Common myeloid progenitor, CD34-positive (primary cell): ENCODE measurements at regions of chr2 and their contacts with region 1.

Region 1: DNA sequence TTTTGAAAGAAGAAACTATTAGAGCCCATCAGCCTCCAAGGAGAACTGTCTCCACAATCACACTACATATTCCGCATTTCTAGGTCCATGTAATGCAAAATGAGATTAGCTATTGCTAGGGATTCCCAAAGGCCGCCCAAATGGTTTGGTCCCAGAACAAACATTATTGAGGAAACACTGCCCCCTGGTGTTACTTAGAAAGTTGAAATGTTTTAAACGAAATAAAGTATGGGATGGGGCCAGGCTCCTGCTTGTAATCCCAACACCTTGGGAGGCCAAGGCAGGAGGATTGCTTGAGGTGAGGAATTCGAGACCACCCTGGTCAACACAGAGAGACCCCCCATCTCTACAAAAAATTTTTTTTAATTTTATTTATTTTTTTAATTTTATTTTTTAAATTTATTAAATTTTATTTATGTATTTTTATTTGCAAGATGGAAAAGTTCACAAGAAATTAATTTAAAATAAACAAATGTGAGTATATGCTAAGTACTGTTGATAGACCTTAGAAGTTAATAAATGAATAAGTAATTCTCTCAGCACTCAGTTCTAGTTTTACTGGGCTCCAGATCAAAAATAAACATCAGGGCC is 5.5 kb downstream of the NHEJ1 start:
- DNase-seq: peak; percentile 65 to 83 (median 74)
- H3K4me3 ChIP-seq: no peak overlapping the region
- H3K27ac ChIP-seq: no peak overlapping the region
- H3K4me1 ChIP-seq: peaks cover 0 to 7% (median 6%) of the 10 kb centered on the region in 4 experiments
- H3K27me3 ChIP-seq: no peaks in the 10 kb centered on the region

Region 2: GRCh38 chr2:218979846-218980734 is 175.1 kb before region 1 on chr2:
- CTCF ChIA-PET with region 1: interaction called, 13 read pairs
- POLR2A ChIA-PET with region 1: no interaction called
- DNase-seq: peak; percentile 87 to 93 (median 91)
- H3K4me3 ChIP-seq: peak overlapping the region in 4 of 7 experiments; percentile 19 to 74 (median 52)
- H3K27ac ChIP-seq: no peak overlapping the region
- H3K4me1 ChIP-seq: peaks cover 0 to 44% (median 24%) of the 10 kb centered on the region in 4 experiments
- H3K27me3 ChIP-seq: peaks cover 9 to 92% (median 32%) of the 10 kb centered on the region in 5 experiments

Region 3: DNA sequence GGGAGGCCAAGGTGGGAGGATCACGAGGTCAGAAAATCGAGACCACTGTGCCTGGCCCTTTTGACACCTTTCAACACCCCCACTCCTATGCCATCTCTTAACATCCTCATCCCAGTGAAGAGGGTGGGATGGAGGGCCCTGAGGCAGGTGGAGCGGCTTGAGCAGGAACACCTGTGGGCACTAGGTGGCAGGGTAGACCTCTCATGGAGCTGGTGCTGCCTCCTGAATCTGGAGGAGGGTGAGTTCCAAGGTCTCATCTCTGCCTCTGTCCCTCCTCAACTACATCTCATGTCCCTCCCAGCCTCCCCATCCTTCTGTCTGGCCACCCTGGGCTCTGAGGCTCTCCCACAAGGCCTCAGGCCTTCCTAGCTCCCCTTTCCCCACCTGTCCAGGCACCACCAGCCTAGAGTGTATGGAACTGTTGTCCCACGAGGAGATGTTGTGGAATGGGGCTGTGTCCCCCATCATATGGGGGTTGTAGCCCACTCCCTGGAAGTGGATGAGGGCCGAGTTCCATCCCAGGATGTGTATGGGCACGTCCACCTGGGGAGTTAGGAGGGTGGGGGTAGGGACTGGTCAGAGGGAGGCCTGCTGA is 144.9 kb before region 1 on chr2:
- CTCF ChIA-PET with region 1: interaction called, 11 read pairs
- POLR2A ChIA-PET with region 1: no interaction called
- DNase-seq: peak in 1 of 3 donors; percentile 45
- H3K4me3 ChIP-seq: no peak overlapping the region
- H3K27ac ChIP-seq: no peak overlapping the region
- H3K4me1 ChIP-seq: no peaks in the 10 kb centered on the region
- H3K27me3 ChIP-seq: peaks cover 7 to 43% (median 12%) of the 10 kb centered on the region in 5 experiments

Region 4: GRCh38 chr2:219073413-219074129 is 81.6 kb before region 1 on chr2:
- CTCF ChIA-PET with region 1: interaction called, 51 read pairs
- POLR2A ChIA-PET with region 1: interaction called, 3 read pairs
- DNase-seq: peak; percentile 44 to 57 (median 50)
- H3K4me3 ChIP-seq: no peak overlapping the region
- H3K27ac ChIP-seq: no peak overlapping the region
- H3K4me1 ChIP-seq: no peaks in the 10 kb centered on the region
- H3K27me3 ChIP-seq: no peaks in the 10 kb centered on the region

Region 5: DNA sequence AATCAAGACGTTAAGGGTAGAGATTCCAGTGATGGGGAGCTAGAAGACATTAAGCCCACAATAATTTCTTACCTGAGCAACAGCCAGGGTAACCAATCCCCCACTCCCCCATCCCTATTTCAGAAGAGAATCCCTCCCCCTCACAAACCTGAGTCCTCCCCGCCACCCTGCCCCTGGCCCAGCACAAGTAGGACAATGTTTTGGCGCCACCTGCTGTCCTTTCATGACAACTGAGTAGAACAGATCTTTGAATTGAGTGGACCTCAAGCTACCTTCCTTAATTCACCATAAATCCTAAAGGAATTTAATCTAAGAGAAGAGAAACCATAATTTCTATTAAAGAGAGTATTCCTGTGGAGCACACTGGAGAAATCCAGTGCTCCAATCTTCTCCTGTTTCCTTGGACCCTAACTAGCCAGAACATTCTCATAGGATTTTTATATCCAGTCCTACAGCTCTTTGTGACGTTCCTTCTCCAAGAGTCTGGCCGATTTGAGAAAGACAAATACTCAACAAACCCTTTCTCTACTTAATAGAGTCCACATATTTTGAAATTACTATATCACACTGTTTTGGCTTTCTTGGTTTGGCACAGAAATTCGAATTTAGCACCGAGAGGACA is 35.6 kb before region 1 on chr2:
- CTCF ChIA-PET with region 1: interaction called, 16 read pairs
- POLR2A ChIA-PET with region 1: interaction called, 3 read pairs
- DNase-seq: peak; percentile 49 to 68 (median 61)
- H3K4me3 ChIP-seq: no peak overlapping the region
- H3K27ac ChIP-seq: no peak overlapping the region
- H3K4me1 ChIP-seq: peaks cover 0 to 11% (median 0%) of the 10 kb centered on the region in 4 experiments
- H3K27me3 ChIP-seq: no peaks in the 10 kb centered on the region

Region 6: DNA sequence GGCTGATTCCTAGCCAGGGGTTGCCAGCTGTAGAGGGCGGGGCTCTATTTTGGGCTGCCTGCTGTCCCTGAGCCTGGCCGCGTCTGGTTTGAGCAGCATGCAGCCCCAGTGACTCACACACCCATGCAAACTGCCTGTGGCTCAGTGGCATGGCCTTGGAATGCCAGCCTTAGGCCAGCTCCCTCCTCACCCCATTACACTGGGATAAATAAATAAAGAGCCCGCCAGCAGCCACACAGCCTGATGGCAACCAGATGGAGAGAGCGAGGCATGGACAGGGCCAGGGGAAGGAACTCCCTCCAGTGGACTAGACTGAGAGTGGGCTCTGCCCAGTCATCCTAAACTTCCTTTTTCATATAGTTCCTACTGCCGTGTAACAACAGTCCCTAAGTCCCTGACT is 12.8 kb before region 1 on chr2:
- CTCF ChIA-PET with region 1: interaction called, 19 read pairs
- POLR2A ChIA-PET with region 1: no interaction called
- DNase-seq: no peak
- H3K4me3 ChIP-seq: no peak overlapping the region
- H3K27ac ChIP-seq: no peak overlapping the region
- H3K4me1 ChIP-seq: no peaks in the 10 kb centered on the region
- H3K27me3 ChIP-seq: no peaks in the 10 kb centered on the region

Region 7: DNA sequence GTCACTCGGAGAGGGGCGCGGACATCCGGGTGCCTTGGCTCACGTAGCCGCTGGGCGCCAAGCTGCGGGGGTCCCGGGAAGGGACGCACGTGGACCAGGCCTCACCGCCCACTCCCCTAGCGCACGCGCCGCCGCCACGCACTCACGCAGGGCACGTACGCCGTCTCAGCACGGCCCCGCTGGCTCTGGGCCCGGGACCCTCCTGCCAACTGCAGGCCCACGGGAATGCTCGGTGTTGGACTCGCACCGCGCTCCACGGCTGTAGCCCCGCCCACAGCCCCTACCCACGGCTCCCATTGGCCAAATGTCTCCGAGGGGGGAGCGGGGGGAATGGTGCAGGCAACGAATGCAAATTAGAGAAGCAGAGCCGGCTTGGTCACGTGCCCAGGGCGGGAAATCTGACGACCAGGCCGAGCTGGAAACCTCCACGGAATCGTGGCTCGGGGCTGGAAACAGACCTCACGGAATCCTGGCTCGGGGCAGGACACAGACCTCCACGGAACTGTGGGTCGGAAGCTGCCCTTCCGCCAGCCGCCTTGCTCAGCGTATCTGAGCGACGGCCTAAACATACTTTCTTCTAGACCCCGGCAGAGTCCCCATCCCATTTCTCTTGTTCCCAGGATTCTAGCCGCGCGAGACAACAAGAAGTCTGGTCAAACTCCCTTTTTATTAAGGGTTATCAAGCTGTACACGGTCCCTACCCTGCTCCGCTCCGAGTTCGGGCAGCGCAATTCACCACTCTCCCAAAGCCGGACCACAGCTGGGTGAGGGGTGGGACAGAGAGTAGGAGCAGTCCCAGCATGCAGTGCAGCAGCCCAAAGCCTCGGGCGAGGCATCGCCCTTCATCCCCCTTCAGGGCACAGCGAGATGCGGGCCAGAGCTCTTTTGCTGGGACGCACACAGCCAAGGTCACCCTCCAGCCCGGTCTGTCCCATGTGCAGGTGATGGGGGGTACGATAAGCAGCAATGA is 63.9 kb after region 1 on chr2 and contains the start of gene ABCB6:
- CTCF ChIA-PET with region 1: interaction called, 120 read pairs
- POLR2A ChIA-PET with region 1: no interaction called
- DNase-seq: peak; percentile 84 to 92 (median 92)
- H3K4me3 ChIP-seq: peak within 1 kb of the TSS in 6 of 7 experiments; percentile 18 to 77 (median 62)
- H3K27ac ChIP-seq: peak within 1 kb of the TSS in 1 of 2 experiments; percentile 25
- H3K4me1 ChIP-seq: peaks cover 0 to 37% (median 27%) of the 10 kb centered on the region in 4 experiments
- H3K27me3 ChIP-seq: no peaks in the 10 kb centered on the region

Region 8: DNA sequence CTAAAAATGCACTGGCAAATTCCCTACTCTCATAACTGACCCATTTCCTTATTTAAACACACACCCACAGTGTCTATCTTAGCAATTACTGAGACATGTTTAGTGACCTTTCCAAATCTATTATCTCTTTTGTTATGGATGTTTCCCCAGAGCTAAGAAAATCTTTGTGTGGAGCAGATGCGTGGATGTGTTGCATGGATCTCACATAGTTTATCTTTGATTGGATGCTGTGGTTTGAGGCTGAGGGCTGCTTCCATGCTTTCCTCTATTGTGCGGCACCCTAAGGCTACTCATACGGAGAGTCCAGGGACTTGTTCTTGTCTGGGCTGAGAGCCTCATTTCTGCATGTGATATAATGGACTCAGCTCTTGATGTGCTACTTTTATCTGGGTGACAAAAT is 79.2 kb after region 1 on chr2:
- CTCF ChIA-PET with region 1: no interaction called
- POLR2A ChIA-PET with region 1: no interaction called
- DNase-seq: no peak
- H3K4me3 ChIP-seq: no peak overlapping the region
- H3K27ac ChIP-seq: no peak overlapping the region
- H3K4me1 ChIP-seq: peaks cover 3 to 15% (median 12%) of the 10 kb centered on the region in 4 experiments
- H3K27me3 ChIP-seq: no peaks in the 10 kb centered on the region

Region 9: DNA sequence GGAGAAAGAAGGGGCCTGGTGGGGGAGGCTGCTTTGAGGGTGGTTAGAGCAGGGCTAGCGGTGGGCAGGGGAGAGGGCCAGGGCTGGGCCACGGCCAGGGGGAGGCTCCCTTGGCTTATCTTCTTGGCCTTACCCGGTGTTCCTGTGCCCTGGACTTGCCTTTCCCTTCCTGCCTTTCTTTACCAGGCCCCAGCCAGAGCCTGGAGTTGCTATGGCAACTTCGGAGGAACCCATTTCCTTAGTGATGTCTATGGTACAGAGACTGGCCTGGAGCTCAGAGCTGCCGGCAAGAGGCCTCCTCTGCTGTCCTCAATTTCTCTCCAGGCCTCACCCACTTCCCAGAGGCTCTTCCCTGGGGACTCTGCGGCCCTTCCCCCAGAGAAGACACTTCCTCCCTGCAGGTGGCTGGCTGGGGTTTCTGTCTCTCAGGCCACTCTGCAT is 291.0 kb after region 1 on chr2:
- CTCF ChIA-PET with region 1: no interaction called
- POLR2A ChIA-PET with region 1: no interaction called
- DNase-seq: peak in 1 of 3 donors; percentile 39
- H3K4me3 ChIP-seq: no peak overlapping the region
- H3K27ac ChIP-seq: no peak overlapping the region
- H3K4me1 ChIP-seq: peaks cover 0 to 27% (median 18%) of the 10 kb centered on the region in 4 experiments
- H3K27me3 ChIP-seq: peaks cover 0 to 86% (median 28%) of the 10 kb centered on the region in 5 experiments